GM12878 (cell line): ENCODE measurements at regions of chr15 and their contacts with region 1.

Region 1: DNA sequence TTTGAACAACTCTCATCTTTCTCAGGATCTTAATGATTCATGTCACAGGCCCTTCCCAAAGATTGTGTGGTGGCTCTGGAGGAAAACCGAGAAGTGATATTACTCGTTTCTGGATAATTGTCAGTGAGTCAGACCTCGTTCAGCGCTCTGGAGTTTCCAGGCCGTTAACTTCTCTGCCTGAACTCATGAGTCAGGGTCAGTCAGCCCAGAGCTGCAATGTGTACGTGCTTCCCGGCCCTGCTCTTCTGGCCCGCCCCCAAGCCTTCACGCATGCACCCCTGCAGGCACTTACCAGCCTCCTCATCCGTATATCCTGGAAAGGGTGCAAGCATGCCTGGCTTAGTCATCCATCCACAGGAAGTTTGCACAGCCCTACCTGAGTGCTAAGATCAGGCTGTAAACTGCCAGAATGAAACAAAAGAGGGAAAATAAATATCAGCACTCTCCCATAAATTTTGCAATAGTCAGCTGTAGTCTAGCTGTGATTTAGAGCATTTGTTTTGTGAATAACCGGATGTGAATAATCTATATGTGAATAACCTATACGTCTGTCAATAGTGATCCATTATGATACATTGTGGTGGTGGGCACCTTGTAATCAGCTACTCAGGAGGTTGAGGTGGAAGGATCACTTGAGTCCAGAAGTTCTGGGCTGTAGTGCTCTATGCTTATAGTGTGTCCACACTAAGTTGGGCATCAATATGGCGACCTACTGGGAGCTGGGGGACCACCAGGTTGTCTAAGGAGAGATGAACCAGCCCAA is 35.3 kb upstream of the SEMA4B start:
- DNase-seq: peak; percentile 64
- ATAC-seq: peak; percentile 74
- H3K4me3 ChIP-seq: no peak overlapping the region
- H3K27ac ChIP-seq: peak overlapping the region; percentile 48
- H3K4me1 ChIP-seq: peaks cover 34% of the 10 kb centered on the region
- H3K27me3 ChIP-seq: no peaks in the 10 kb centered on the region
- CTCF ChIP-seq: no peak
- EP300 ChIP-seq: no peak
- POLR2A ChIP-seq: no peak
- RAD21 ChIP-seq: no peak

Region 2: GRCh38 chr15:90099868-90100831 is 65.7 kb before region 1 on chr15:
- CTCF ChIA-PET with region 1: no interaction called
- POLR2A ChIA-PET with region 1: no interaction called
- RAD21 ChIA-PET with region 1: no interaction called
- SMC1A ChIA-PET with region 1: no interaction called
- in situ Hi-C with region 1: no loop called
- intact Hi-C with region 1: no loop called
- DNase-seq: no peak
- ATAC-seq: peak; percentile 15
- H3K4me3 ChIP-seq: peak overlapping the region; percentile 79
- H3K27ac ChIP-seq: peak overlapping the region; percentile 91
- H3K4me1 ChIP-seq: peaks cover 52% of the 10 kb centered on the region
- H3K27me3 ChIP-seq: no peaks in the 10 kb centered on the region
- CTCF ChIP-seq: no peak
- EP300 ChIP-seq: 0 out of 4 replicates have a peak, but pooled peaks of 1 of the 2 experiments have one; percentile 23
- POLR2A ChIP-seq: no peak
- RAD21 ChIP-seq: no peak

Region 3: GRCh38 chr15:90149609-90150340 is 16.1 kb before region 1 on chr15:
- CTCF ChIA-PET with region 1: interaction called, 7 read pairs
- POLR2A ChIA-PET with region 1: no interaction called
- RAD21 ChIA-PET with region 1: interaction called, 15 read pairs
- SMC1A ChIA-PET with region 1: interaction called, 6 read pairs
- in situ Hi-C with region 1: no loop called
- intact Hi-C with region 1: no loop called
- DNase-seq: no peak
- ATAC-seq: no peak; the same call in 2 of the 3 replicates
- H3K4me3 ChIP-seq: no peak overlapping the region
- H3K27ac ChIP-seq: 0 out of 2 replicates have a peak overlapping the region, but pooled peaks have one; percentile 20
- H3K4me1 ChIP-seq: peaks cover 17% of the 10 kb centered on the region
- H3K27me3 ChIP-seq: no peaks in the 10 kb centered on the region
- CTCF ChIP-seq: no peak
- EP300 ChIP-seq: no peak
- POLR2A ChIP-seq: no peak
- RAD21 ChIP-seq: no peak

Region 4: DNA sequence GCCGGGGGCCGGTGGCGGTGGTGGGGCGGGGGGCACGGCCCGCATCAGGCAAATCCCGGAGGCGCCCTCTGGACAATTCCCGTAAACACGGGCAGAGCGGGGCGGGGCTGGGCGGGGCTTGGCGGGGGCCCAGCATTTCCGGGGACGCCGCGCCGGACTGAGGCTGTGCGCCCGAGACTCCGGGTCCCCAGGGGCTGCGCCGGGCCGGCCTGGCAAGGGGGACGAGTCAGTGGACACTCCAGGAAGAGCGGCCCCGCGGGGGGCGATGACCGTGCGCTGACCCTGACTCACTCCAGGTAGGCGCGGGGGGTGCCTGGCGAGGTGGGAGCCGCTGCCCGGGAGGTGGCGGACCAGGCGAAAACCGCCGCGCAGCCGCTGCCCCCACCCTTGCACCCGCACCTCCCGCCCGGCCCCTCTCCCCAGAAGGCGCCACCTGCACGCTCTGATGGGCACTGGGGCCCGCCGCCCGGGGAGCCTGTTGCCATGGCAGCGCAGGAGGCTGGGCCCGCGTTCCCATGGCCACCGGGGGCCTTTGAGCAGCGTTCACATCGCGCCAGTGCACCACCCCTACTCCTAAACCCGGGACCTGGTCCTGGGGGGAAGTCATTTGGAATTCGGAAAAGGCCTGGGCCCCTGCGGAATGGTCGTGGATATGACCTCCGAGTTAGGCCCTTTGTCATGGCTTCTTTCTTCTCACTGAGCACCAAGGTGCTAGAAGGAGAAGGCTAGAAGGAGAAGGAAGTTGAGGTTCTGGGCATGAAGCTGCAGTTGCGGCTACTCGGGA is 19.1 kb after region 1 on chr15:
- CTCF ChIA-PET with region 1: interaction called, 22 read pairs
- POLR2A ChIA-PET with region 1: interaction called, 5 read pairs
- RAD21 ChIA-PET with region 1: interaction called, 21 read pairs
- SMC1A ChIA-PET with region 1: interaction called, 58 read pairs
- in situ Hi-C with region 1: no loop called
- intact Hi-C with region 1: no loop called
- DNase-seq: no peak
- ATAC-seq: peak; percentile 92
- H3K4me3 ChIP-seq: peak overlapping the region; percentile 80
- H3K27ac ChIP-seq: peak overlapping the region; percentile 86
- H3K4me1 ChIP-seq: peaks cover 16% of the 10 kb centered on the region
- H3K27me3 ChIP-seq: no peaks in the 10 kb centered on the region
- CTCF ChIP-seq: no peak
- EP300 ChIP-seq: no peak
- POLR2A ChIP-seq: peak; percentile 66
- RAD21 ChIP-seq: no peak

Region 5: DNA sequence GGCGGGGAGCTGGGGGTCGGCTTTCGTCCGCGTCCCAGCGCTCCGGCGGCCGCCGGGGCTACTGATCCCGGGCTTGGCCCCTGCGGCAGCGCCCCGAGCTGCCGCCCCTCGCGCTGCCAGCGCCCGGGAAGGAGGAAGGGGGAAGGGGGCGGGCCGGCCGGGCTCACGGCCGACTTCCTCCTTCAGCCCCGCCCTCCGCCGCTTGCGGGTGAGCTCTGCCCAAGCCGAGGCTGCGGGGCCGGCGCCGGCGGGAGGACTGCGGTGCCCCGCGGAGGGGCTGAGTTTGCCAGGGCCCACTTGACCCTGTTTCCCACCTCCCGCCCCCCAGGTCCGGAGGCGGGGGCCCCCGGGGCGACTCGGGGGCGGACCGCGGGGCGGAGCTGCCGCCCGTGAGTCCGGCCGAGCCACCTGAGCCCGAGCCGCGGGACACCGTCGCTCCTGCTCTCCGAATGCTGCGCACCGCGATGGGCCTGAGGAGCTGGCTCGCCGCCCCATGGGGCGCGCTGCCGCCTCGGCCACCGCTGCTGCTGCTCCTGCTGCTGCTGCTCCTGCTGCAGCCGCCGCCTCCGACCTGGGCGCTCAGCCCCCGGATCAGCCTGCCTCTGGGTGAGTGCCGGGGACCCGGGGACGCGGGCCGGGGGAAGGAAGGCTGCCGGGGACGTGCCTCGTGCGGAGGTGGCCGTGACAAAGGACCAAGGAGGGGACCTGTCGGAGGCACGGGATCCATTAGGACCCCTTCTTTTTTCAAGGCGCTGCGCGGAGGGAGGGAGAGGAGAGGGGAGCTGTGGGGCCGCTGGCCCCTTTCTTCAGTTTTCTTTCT is 35.5 kb after region 1 on chr15 and contains the start of gene SEMA4B:
- CTCF ChIA-PET with region 1: interaction called, 8 read pairs
- POLR2A ChIA-PET with region 1: interaction called, 17 read pairs
- RAD21 ChIA-PET with region 1: interaction called, 26 read pairs
- SMC1A ChIA-PET with region 1: interaction called, 10 read pairs
- in situ Hi-C with region 1: no loop called
- intact Hi-C with region 1: loop called (anchors 5 kb)
- DNase-seq: no peak
- ATAC-seq: peak; percentile 94
- H3K4me3 ChIP-seq: peak within 1 kb of the TSS; percentile 95
- H3K27ac ChIP-seq: peak within 1 kb of the TSS; percentile 37; the same call in 1 of the 2 replicates
- H3K4me1 ChIP-seq: peaks cover 14% of the 10 kb centered on the region
- H3K27me3 ChIP-seq: no peaks in the 10 kb centered on the region
- CTCF ChIP-seq: no peak
- EP300 ChIP-seq: no peak
- POLR2A ChIP-seq: peak; percentile 80
- RAD21 ChIP-seq: no peak
- polyA plus RNA-seq, gene SEMA4B: 0.87 to 1.4 TPM

Region 6: DNA sequence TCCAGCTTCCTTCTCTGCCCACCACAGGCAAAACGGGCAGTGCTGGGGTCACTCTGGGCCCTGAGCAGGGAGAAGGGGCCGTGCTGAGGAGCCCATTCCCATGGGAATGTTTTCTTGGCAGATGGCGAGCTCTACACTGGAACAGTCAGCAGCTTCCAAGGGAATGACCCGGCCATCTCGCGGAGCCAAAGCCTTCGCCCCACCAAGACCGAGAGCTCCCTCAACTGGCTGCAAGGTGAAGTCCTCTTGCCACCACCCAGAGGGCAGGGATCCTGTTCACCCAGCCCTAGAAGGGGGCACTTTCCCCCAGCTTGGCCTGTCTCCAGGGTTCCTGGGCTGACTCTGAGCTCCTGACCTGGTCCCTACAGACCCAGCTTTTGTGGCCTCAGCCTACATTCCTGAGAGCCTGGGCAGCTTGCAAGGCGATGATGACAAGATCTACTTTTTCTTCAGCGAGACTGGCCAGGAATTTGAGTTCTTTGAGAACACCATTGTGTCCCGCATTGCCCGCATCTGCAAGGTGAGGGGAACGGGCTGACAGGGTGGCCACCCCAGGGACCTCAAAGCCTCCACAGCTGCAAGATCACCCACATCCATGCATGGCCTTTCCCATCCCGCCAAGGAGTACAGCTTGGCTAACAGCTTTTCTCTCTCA is 55.5 kb after region 1 on chr15:
- CTCF ChIA-PET with region 1: interaction called, 7 read pairs
- POLR2A ChIA-PET with region 1: interaction called, 8 read pairs
- RAD21 ChIA-PET with region 1: interaction called, 25 read pairs
- SMC1A ChIA-PET with region 1: interaction called, 3 read pairs
- in situ Hi-C with region 1: loop called (anchors 5 kb)
- intact Hi-C with region 1: no loop called
- DNase-seq: no peak
- ATAC-seq: peak; percentile 83
- H3K4me3 ChIP-seq: no peak overlapping the region
- H3K27ac ChIP-seq: no peak overlapping the region
- H3K4me1 ChIP-seq: peaks cover 2% of the 10 kb centered on the region; the same call in 1 of the 2 replicates
- H3K27me3 ChIP-seq: no peaks in the 10 kb centered on the region
- CTCF ChIP-seq: peak; percentile 66 to 82 (median 81)
- EP300 ChIP-seq: no peak
- POLR2A ChIP-seq: no peak
- RAD21 ChIP-seq: peak; percentile 82

Region 7: GRCh38 chr15:90300988-90301706 is 135.3 kb after region 1 on chr15:
- CTCF ChIA-PET with region 1: interaction called, 12 read pairs
- POLR2A ChIA-PET with region 1: interaction called, 3 read pairs
- RAD21 ChIA-PET with region 1: no interaction called
- SMC1A ChIA-PET with region 1: no interaction called
- in situ Hi-C with region 1: no loop called
- intact Hi-C with region 1: no loop called
- DNase-seq: no peak
- ATAC-seq: peak; percentile 86
- H3K4me3 ChIP-seq: no peak overlapping the region
- H3K27ac ChIP-seq: no peak overlapping the region
- H3K4me1 ChIP-seq: peaks cover 14% of the 10 kb centered on the region; the same call in 1 of the 2 replicates
- H3K27me3 ChIP-seq: no peaks in the 10 kb centered on the region
- CTCF ChIP-seq: peak; percentile 63 to 92 (median 90)
- EP300 ChIP-seq: no peak
- POLR2A ChIP-seq: no peak
- RAD21 ChIP-seq: peak; percentile 24; the same call in 1 of the 2 replicates

Region 8: GRCh38 chr15:91407237-91407889 is 1241.5 kb after region 1 on chr15:
- CTCF ChIA-PET with region 1: no interaction called
- POLR2A ChIA-PET with region 1: no interaction called
- RAD21 ChIA-PET with region 1: no interaction called
- SMC1A ChIA-PET with region 1: no interaction called
- in situ Hi-C with region 1: no loop called
- intact Hi-C with region 1: no loop called
- DNase-seq: no peak
- ATAC-seq: no peak
- H3K4me3 ChIP-seq: no peak overlapping the region
- H3K27ac ChIP-seq: no peak overlapping the region
- H3K4me1 ChIP-seq: no peaks in the 10 kb centered on the region
- H3K27me3 ChIP-seq: no peaks in the 10 kb centered on the region
- CTCF ChIP-seq: no peak
- EP300 ChIP-seq: no peak
- POLR2A ChIP-seq: no peak
- RAD21 ChIP-seq: no peak